Naive thymus-derived CD4-positive, alpha-beta T cell (primary cell): ENCODE measurements at regions of chr5 and their contacts with region 1.

Region 1: DNA sequence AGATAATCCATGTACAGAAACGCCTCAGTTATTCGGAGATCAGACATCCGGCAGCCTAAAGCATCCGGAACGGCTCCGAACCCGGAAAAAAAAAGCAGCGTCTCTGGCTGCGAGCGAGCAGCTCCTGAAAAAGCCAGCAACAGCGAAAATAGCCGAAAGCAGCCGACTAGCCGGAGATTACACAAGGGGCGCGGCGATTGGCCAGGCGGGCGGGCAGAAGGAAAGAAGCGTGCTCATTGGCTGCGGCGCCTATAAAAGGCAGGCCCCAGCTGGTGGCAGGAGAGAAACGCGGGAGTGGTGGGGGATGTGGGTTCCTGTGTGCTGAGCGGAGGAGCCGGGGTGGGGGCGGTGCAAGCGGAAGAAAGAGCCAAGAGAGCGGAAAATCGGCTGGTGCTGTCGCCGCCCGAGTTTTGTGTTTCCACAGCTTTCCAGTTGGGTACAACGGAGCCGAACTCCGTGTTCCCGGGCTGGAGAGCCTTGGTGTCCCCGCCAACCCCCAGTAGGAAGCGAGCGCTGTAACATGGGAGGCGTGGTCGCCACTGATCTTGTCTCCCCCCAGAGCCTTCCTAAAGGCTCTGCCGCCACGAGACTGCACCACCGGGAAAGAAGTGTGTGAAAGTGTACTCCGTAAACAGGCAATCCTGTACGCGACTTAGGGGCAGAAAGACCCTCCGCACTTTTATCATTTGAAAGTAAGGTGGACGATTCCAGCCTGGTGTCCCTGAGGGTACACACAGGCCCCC is at the start of gene ARL15:
- DNase-seq: peak; percentile 95 to 99 (median 98)
- ATAC-seq: peak; percentile 96
- H3K4me3 ChIP-seq: peak within 1 kb of the TSS; percentile 96
- H3K4me3 Mint-ChIP-seq: peak within 1 kb of the TSS; percentile 85 to 98 (median 94)
- H3K27ac ChIP-seq: peak within 1 kb of the TSS; percentile 78
- H3K27ac Mint-ChIP-seq: peak within 1 kb of the TSS; percentile 84 to 98 (median 95)
- H3K4me1 ChIP-seq: peaks cover 0 to 7% of the 10 kb centered on the region in 2 donors
- H3K4me1 Mint-ChIP-seq: peaks cover 12 to 36% (median 27%) of the 10 kb centered on the region in 7 donors
- H3K27me3 ChIP-seq: no peaks in the 10 kb centered on the region
- H3K27me3 Mint-ChIP-seq: peaks cover 0 to 28% (median 5%) of the 10 kb centered on the region in 5 donors
- total RNA-seq, gene ARL15: 9.6 to 15.6 (median 13.6) TPM

Region 2: GRCh38 chr5:53481887-53482716 is 828.5 kb before region 1 on chr5:
- CTCF ChIA-PET with region 1: no interaction called
- POLR2A ChIA-PET with region 1: no interaction called
- intact Hi-C with region 1: loop called (anchors 2 to 5 kb)
- DNase-seq: peak; percentile 34 to 73 (median 50)
- ATAC-seq: peak; percentile 78
- H3K4me3 ChIP-seq: peak overlapping the region; percentile 67
- H3K4me3 Mint-ChIP-seq: peak overlapping the region; percentile 86 to 99 (median 90)
- H3K27ac ChIP-seq: no peak overlapping the region
- H3K27ac Mint-ChIP-seq: peak overlapping the region; percentile 25 to 93 (median 74)
- H3K4me1 ChIP-seq: peaks cover 10 to 11% of the 10 kb centered on the region in 2 donors
- H3K4me1 Mint-ChIP-seq: peaks cover 34 to 46% (median 42%) of the 10 kb centered on the region in 7 donors
- H3K27me3 ChIP-seq: peaks cover 0 to 13% of the 10 kb centered on the region in 2 donors
- H3K27me3 Mint-ChIP-seq: peaks cover 48 to 80% (median 61%) of the 10 kb centered on the region in 5 donors

Region 3: DNA sequence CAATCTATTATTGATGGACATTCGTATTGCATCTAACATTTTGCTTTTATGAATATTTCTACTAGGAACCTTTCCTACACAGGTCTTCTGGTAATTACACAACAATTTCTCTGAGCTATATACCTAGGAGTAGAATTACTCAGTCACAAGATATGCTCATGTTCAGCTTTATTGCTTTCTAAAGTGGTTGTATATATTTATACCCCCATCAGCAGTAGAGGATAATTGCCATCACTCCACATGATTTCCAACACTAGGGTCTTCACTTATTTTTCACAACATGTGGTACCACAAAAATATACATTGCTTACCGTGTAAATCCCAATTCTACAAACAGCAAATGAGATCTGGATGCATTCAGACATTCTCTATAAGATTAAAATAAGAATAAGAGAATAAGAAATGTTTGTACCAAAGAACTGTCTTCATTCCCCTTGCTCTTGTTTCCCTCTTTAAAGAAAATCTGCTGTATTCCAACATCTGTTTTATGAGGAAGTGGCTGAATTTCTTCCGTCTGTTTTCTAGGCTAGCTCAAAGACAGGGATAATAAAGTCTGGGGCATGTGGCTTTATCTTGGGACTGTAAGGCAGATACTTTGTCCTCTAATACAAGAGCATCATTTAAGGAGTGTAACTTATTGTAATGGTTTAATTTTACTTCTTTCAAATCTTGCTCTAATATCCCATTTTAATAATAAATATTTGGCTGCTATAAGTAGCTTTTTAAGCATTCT is 28.5 kb before region 1 on chr5:
- CTCF ChIA-PET with region 1: no interaction called
- POLR2A ChIA-PET with region 1: no interaction called
- intact Hi-C with region 1: no loop called
- DNase-seq: no peak
- ATAC-seq: no peak
- H3K4me3 ChIP-seq: no peak overlapping the region
- H3K4me3 Mint-ChIP-seq: no peak overlapping the region
- H3K27ac ChIP-seq: no peak overlapping the region
- H3K27ac Mint-ChIP-seq: no peak overlapping the region
- H3K4me1 ChIP-seq: no peaks in the 10 kb centered on the region
- H3K4me1 Mint-ChIP-seq: peaks cover 0 to 10% (median 4%) of the 10 kb centered on the region in 7 donors
- H3K27me3 ChIP-seq: no peaks in the 10 kb centered on the region
- H3K27me3 Mint-ChIP-seq: no peaks in the 10 kb centered on the region

Region 4: DNA sequence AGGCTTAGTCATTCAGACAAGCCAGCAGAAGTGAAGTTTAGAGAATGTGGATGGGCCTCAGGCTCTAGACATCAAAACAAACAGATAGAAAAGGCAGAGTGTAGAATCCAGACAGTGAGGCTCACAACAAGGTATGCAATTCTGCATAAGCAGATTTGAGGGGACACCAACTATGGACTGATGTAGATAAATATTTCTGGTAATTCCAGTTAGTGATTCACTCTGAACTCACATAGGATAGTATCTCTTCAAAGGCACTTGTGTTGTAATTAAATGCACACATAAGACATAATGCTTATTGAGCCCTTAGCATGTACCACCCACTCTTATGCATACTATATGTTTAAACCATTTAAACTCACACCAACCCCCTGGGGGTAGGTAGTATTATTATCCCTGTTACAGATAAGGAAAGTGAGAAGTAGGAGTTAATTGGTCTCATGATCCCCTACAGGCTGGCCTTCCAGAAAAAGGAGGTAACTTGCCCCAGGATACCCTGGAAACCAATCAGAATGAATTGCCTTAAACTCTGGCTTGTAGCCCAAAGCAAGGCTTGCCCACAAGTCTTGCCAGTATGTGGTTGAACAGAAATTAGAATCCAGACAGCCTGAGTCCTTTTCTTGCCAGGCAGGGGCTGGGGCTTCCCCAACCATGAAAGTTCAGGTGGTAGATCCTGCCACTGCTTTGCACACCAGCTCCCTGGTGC is 105.4 kb after region 1 on chr5:
- CTCF ChIA-PET with region 1: interaction called, 3 read pairs
- POLR2A ChIA-PET with region 1: interaction called, 5 read pairs
- intact Hi-C with region 1: loop called (anchors 1 to 5 kb)
- DNase-seq: no peak
- ATAC-seq: no peak
- H3K4me3 ChIP-seq: no peak overlapping the region
- H3K4me3 Mint-ChIP-seq: no peak overlapping the region
- H3K27ac ChIP-seq: no peak overlapping the region
- H3K27ac Mint-ChIP-seq: no peak overlapping the region
- H3K4me1 ChIP-seq: no peaks in the 10 kb centered on the region
- H3K4me1 Mint-ChIP-seq: peaks cover 0 to 1% (median 0%) of the 10 kb centered on the region in 7 donors
- H3K27me3 ChIP-seq: no peaks in the 10 kb centered on the region
- H3K27me3 Mint-ChIP-seq: peaks cover 4 to 32% (median 10%) of the 10 kb centered on the region in 5 donors

Region 5: GRCh38 chr5:54646356-54647101 is 335.9 kb after region 1 on chr5:
- CTCF ChIA-PET with region 1: no interaction called
- POLR2A ChIA-PET with region 1: no interaction called
- intact Hi-C with region 1: loop called (anchors 1 to 5 kb)
- DNase-seq: peak; percentile 18 to 81 (median 70)
- ATAC-seq: peak; percentile 88
- H3K4me3 ChIP-seq: peak overlapping the region; percentile 44
- H3K4me3 Mint-ChIP-seq: peak overlapping the region; percentile 63 to 85 (median 80)
- H3K27ac ChIP-seq: peak overlapping the region; percentile 64
- H3K27ac Mint-ChIP-seq: peak overlapping the region; percentile 94 to 99 (median 97)
- H3K4me1 ChIP-seq: peaks cover 44 to 48% of the 10 kb centered on the region in 2 donors
- H3K4me1 Mint-ChIP-seq: peaks cover 41 to 72% (median 60%) of the 10 kb centered on the region in 7 donors
- H3K27me3 ChIP-seq: no peaks in the 10 kb centered on the region
- H3K27me3 Mint-ChIP-seq: no peaks in the 10 kb centered on the region

Region 6: DNA sequence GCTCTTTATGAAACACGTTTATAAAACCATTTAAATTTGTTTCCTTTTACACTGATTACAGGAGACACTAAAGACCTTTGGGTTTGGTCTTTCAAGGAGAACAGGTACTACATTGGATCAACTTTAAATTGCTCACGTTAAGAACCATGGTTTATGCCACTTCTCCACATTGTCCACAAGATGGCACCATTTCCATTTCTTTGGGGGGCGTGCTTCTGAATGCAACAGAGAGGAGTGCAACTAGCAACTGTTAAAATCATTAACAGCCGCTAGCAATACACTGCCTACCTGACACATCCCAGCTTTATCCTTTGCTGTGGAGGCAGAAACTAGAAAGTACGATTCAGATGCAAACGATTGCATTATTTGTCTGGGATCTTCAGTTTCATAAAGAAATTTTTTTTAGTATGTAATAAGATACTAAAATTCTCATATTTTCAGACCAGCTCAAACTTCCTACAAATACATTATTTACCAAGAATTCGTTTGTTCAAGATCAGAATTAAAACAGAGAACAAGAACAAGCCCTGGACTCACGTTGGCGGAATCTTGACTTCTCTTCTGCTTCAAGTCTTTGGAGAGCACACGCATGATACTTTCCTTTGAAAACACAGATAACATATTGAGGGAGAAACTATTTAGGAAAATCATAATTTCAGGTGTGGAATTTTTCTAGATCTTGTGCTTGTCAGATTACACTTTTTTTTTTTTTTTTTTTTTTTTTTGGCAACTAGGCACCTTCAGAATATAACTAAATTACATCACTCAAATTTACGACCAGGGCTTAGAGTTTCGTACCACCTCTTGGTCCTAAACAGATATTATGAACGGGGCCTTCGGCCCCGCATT is 861.7 kb after region 1 on chr5:
- CTCF ChIA-PET with region 1: no interaction called
- POLR2A ChIA-PET with region 1: no interaction called
- intact Hi-C with region 1: loop called in 1 of 2 experiments (anchors 10 kb)
- DNase-seq: peak in 8 of 9 donors; percentile 53 to 81 (median 75)
- ATAC-seq: peak; percentile 80
- H3K4me3 ChIP-seq: peak overlapping the region; percentile 42
- H3K4me3 Mint-ChIP-seq: peak overlapping the region; percentile 78 to 93 (median 86)
- H3K27ac ChIP-seq: no peak overlapping the region
- H3K27ac Mint-ChIP-seq: peak overlapping the region in 4 of 9 donors; percentile 4 to 83 (median 57)
- H3K4me1 ChIP-seq: peaks cover 14 to 25% of the 10 kb centered on the region in 2 donors
- H3K4me1 Mint-ChIP-seq: peaks cover 23 to 45% (median 35%) of the 10 kb centered on the region in 7 donors
- H3K27me3 ChIP-seq: peaks cover 25 to 42% of the 10 kb centered on the region in 2 donors
- H3K27me3 Mint-ChIP-seq: peaks cover 73 to 88% (median 78%) of the 10 kb centered on the region in 5 donors

Region 7: GRCh38 chr5:55711968-55712859 is 1401.6 kb after region 1 on chr5 and contains the start of gene SLC38A9:
- CTCF ChIA-PET with region 1: no interaction called
- POLR2A ChIA-PET with region 1: no interaction called
- intact Hi-C with region 1: loop called in 1 of 2 experiments (anchors 1 kb)
- DNase-seq: peak; percentile 82 to 91 (median 90)
- ATAC-seq: peak; percentile 100
- H3K4me3 ChIP-seq: peak within 1 kb of the TSS; percentile 87
- H3K4me3 Mint-ChIP-seq: peak within 1 kb of the TSS; percentile 94 to 99 (median 98)
- H3K27ac ChIP-seq: peak within 1 kb of the TSS; percentile 72
- H3K27ac Mint-ChIP-seq: peak within 1 kb of the TSS; percentile 76 to 97 (median 91)
- H3K4me1 ChIP-seq: peaks cover 12 to 16% of the 10 kb centered on the region in 2 donors
- H3K4me1 Mint-ChIP-seq: peaks cover 20 to 40% (median 29%) of the 10 kb centered on the region in 7 donors
- H3K27me3 ChIP-seq: no peaks in the 10 kb centered on the region
- H3K27me3 Mint-ChIP-seq: peaks cover 0 to 3% (median 0%) of the 10 kb centered on the region in 5 donors
- total RNA-seq, gene SLC38A9: 17.7 to 32.6 (median 30.4) TPM